ENCODE measurements at regions of chr3 and their contacts with region 1.

Region 1: DNA sequence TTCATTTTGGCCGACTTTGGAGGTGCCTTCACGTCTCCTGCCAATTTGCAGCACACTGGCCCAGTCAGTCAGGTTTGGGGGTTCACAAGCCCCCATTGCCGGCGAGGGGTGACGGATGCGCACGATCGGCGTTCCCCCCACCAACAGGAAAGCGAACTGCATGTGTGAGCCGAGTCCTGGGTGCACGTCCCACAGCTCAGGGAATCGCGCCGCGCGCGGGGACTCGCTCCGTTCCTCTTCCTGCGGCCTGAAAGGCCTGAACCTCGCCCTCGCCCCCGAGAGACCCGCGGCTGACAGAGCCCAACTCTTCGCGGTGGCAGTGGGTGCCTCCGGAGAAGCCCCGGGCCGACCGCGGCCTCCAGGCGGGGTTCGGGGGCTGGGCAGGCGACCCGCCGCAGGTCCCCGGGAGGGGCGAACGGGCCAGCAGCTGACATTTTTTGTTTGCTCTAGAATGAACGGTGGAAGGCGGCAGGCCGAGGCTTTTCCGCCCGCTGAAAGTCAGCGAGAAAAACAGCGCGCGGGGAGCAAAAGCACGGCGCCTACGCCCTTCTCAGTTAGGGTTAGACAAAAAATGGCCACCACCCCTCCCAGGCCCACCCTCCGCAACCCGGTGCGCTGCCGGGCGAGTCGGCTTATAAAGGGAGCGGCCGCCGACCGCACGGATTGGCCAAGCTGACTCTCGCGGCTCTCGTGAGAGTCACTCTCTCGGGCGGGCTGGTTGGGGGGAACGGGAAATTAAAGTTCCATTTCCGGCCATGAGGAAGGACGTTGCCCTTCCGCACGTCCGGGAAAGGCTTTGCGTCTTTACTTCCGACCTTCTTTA is at the start of gene TERC:
- DNase-seq: peak; percentile 95
- ATAC-seq: peak; percentile 84
- H3K4me3 Mint-ChIP-seq: peak within 1 kb of the TSS; percentile 91
- H3K27ac Mint-ChIP-seq: peak within 1 kb of the TSS; percentile 98
- H3K4me1 Mint-ChIP-seq: peaks cover 23% of the 10 kb centered on the region
- H3K27me3 Mint-ChIP-seq: no peaks in the 10 kb centered on the region
- total RNA-seq, gene TERC: 2.6 to 11.1 TPM

Region 2: GRCh38 chr3:169591983-169592644 is 172.5 kb before region 1 on chr3:
- CTCF ChIA-PET with region 1: no interaction called
- POLR2A ChIA-PET with region 1: no interaction called
- intact Hi-C with region 1: no loop called
- DNase-seq: no peak
- ATAC-seq: no peak
- H3K4me3 Mint-ChIP-seq: no peak overlapping the region
- H3K27ac Mint-ChIP-seq: no peak overlapping the region
- H3K4me1 Mint-ChIP-seq: no peaks in the 10 kb centered on the region
- H3K27me3 Mint-ChIP-seq: peaks cover 4% of the 10 kb centered on the region

Region 3: DNA sequence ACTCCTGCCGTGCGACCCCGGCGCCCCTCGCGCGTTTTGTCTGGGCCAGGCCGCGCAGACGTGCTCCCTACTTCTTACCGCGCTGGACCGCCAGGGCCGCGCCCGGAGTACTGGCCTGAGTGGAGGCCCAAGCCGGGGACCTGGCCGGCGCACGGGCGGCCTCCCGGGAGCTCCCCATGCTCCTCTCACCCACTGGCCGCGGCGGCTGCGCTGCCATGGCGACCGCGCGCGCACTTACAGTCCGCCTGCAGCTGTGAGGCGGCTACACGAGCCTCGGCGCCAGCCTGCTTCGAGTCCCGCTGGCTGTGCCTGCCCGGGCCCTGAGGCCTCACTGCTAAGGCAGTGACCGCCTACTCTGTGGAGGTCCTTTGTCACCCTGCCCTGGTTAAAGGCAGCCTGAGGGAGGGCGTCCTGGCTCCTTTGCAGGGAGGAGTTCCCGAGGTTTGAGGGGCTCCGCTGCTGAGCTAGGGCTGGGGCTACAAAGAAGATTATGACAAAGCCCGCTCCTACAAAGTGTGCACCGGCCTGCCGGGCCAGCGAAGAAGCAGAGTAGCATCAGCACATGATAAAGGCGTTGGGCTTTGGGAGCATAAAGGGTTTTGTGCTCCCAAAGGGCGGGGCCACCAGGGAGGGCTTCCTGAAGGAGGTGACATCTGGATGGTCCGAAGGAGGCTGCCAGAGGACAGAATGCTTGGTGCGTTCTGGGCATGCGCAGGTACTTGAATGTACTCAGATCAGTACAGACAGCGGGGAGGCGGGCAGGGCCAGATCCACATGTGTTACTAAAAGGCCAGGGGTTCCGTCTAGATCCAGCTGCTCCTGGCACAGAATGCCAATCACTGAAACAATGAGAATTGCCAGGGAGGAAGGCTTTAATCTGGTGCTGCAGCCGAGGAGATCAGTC is 47.9 kb after region 1 on chr3 and contains the starts of genes LRRC34 and LRRIQ4:
- CTCF ChIA-PET with region 1: no interaction called
- POLR2A ChIA-PET with region 1: no interaction called
- intact Hi-C with region 1: loop called (anchors 1 to 2 kb)
- DNase-seq: peak; percentile 90
- ATAC-seq: peak; percentile 77
- H3K4me3 Mint-ChIP-seq: peak within 1 kb of the TSS; percentile 77
- H3K27ac Mint-ChIP-seq: peak within 1 kb of the TSS; percentile 82
- H3K4me1 Mint-ChIP-seq: peaks cover 27% of the 10 kb centered on the region
- H3K27me3 Mint-ChIP-seq: peaks cover 2% of the 10 kb centered on the region
- total RNA-seq, gene LRRC34: 3.8 TPM
- total RNA-seq, gene LRRIQ4: 0.09 to 0.12 TPM

Region 4: GRCh38 chr3:169966428-169966950 is 201.8 kb after region 1 on chr3 and contains the start of gene SEC62:
- CTCF ChIA-PET with region 1: interaction called, 3 read pairs
- POLR2A ChIA-PET with region 1: interaction called, 9 read pairs
- intact Hi-C with region 1: loop called (anchors 2 kb)
- DNase-seq: peak; percentile 97
- ATAC-seq: peak; percentile 85
- H3K4me3 Mint-ChIP-seq: peak within 1 kb of the TSS; percentile 83
- H3K27ac Mint-ChIP-seq: peak within 1 kb of the TSS; percentile 95
- H3K4me1 Mint-ChIP-seq: peaks cover 62% of the 10 kb centered on the region
- H3K27me3 Mint-ChIP-seq: no peaks in the 10 kb centered on the region
- total RNA-seq, gene SEC62: 62.8 to 74.7 TPM

Region 5: GRCh38 chr3:170055209-170055608 is 290.5 kb after region 1 on chr3:
- CTCF ChIA-PET with region 1: interaction called, 4 read pairs
- POLR2A ChIA-PET with region 1: no interaction called
- intact Hi-C with region 1: loop called (anchors 2 to 5 kb)
- DNase-seq: peak; percentile 45
- ATAC-seq: peak; percentile 70
- H3K4me3 Mint-ChIP-seq: no peak overlapping the region
- H3K27ac Mint-ChIP-seq: no peak overlapping the region
- H3K4me1 Mint-ChIP-seq: peaks cover 41% of the 10 kb centered on the region
- H3K27me3 Mint-ChIP-seq: no peaks in the 10 kb centered on the region

Region 6: DNA sequence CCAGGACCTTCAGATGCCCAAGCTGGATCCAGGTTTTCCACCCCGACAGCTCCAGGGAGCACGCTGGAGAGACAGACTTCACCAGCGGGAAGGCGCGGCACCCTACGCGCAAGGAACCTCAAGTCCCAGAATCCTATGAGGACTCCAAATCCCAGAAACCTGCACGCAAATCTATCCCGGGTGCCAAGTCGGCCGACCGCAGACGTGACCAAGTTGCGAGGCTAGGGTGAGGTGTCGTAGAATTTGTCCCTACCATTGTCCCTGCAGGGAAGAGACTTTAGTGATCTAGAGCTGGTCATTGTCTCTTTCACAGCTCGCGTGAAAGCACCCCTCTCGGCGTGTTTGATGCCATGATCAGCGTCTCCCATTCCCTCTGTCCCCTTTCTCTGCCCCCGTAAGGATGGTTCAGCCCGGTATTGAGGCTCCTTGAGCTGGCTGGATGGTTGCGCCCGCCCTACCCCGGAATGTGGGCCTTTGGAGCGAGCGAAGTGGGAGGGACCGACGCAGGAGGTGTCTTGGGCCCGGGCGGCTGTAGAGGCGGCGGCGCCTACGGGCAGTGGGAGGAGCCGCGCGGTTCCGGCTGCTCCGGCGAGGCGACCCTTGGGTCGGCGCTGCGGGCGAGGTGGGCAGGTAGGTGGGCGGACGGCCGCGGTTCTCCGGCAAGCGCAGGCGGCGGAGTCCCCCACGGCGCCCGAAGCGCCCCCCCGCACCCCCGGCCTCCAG is 457.4 kb after region 1 on chr3 and contains the start of gene PRKCI:
- CTCF ChIA-PET with region 1: no interaction called
- POLR2A ChIA-PET with region 1: interaction called, 3 read pairs
- intact Hi-C with region 1: loop called in 1 of 2 experiments (anchors 2 kb)
- DNase-seq: peak; percentile 95
- ATAC-seq: peak; percentile 95
- H3K4me3 Mint-ChIP-seq: peak within 1 kb of the TSS; percentile 89
- H3K27ac Mint-ChIP-seq: peak within 1 kb of the TSS; percentile 95
- H3K4me1 Mint-ChIP-seq: peaks cover 32% of the 10 kb centered on the region
- H3K27me3 Mint-ChIP-seq: no peaks in the 10 kb centered on the region
- total RNA-seq, gene PRKCI: 32.3 to 33.0 TPM

Region 7: GRCh38 chr3:170572665-170573253 is 808.1 kb after region 1 on chr3:
- CTCF ChIA-PET with region 1: no interaction called
- POLR2A ChIA-PET with region 1: no interaction called
- intact Hi-C with region 1: loop called in 1 of 2 experiments (anchors 10 kb)
- DNase-seq: peak; percentile 32
- ATAC-seq: peak; percentile 97
- H3K4me3 Mint-ChIP-seq: no peak overlapping the region
- H3K27ac Mint-ChIP-seq: no peak overlapping the region
- H3K4me1 Mint-ChIP-seq: peaks cover 25% of the 10 kb centered on the region
- H3K27me3 Mint-ChIP-seq: peaks cover 34% of the 10 kb centered on the region

Region 8: DNA sequence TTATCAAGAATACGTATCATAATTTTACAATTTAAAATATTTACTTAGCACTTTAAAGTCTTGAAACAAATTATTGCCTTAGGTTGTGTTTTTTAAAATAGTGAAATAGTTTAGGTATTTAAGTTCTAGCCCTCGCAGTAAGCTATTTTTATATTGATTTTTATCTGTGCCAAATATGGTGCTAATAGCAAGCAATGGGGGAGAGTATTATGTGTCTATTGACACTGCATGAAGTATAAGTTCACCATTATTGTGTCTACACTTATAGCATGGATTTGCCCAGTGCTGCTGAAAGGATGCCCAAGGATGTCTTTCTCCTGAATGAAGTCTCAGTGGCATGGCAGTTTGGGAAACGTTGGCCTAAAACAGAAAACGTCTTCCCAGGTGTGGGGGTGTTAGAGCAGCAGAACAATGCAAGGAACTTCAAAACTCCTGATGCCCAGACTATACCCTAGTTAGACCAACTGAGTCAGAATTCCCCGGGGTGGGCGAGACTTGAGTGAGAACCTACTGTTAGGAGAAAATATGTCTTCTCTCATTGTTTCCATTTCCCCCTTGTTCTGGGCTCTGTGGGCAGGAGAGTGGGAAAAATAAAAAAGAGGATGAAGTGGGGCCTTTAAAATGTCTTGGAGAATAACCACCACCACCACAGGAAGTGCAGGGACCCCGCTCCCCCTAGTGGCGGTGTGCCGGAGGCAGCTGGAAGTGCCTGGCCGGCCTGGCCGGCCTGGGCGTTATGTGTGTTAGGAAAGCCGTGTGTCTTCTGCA is 925.4 kb after region 1 on chr3:
- CTCF ChIA-PET with region 1: no interaction called
- POLR2A ChIA-PET with region 1: no interaction called
- intact Hi-C with region 1: no loop called
- DNase-seq: peak; percentile 73
- ATAC-seq: peak; percentile 49
- H3K4me3 Mint-ChIP-seq: no peak overlapping the region
- H3K27ac Mint-ChIP-seq: no peak overlapping the region
- H3K4me1 Mint-ChIP-seq: peaks cover 4% of the 10 kb centered on the region
- H3K27me3 Mint-ChIP-seq: no peaks in the 10 kb centered on the region

Region 9: GRCh38 chr3:170724599-170725280 is 960.1 kb after region 1 on chr3:
- CTCF ChIA-PET with region 1: no interaction called
- POLR2A ChIA-PET with region 1: no interaction called
- intact Hi-C with region 1: no loop called
- DNase-seq: no peak
- ATAC-seq: no peak
- H3K4me3 Mint-ChIP-seq: no peak overlapping the region
- H3K27ac Mint-ChIP-seq: no peak overlapping the region
- H3K4me1 Mint-ChIP-seq: no peaks in the 10 kb centered on the region
- H3K27me3 Mint-ChIP-seq: peaks cover 16% of the 10 kb centered on the region

Region 10: DNA sequence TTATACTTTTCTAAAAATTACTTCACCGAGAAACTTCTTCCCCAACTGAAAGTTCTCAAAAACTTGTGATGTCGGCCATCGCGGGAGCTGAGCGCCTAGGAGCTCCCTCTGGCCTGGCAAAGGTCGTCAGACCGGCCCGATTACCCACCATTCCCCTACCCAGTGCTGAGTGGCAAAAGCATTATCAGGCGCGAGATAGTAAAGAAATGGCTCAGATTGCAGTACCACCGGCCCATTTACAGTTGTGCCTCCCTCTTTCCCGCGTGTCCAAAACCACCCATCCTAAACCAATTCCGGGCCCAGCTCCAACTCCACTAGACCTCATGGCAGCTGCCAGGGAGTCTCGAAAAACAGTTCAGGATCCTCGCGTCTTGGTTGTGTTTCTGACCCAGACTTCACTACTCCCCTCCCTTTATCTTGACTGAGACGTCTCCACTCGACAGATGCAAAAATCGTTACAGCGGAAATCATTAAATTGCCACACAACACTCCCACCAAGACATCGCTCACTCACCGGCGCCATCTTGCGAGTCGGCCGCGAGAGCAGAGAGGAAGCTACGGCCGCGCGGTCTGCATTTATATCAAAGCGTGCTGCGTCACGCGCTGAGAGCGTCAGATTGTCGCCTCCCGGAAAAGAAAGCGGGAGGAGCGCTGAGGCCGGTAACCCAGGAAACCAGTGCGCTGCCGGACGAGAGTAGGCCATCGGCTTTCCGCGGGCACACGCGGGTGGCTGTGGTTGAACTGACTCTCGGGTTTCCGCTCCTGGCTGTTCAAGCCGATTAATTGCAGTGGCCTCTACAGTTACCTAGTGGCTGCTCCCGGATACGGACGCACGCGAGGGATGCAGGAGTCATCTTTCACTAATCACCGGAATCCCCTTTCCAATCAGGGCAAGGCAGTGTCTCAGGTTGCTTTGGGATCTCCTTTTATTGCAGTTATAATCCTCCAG is 1105.3 kb after region 1 on chr3 and contains the start of gene RPL22L1:
- CTCF ChIA-PET with region 1: no interaction called
- POLR2A ChIA-PET with region 1: interaction called, 4 read pairs
- intact Hi-C with region 1: loop called in 1 of 2 experiments (anchors 5 kb)
- DNase-seq: peak; percentile 96
- ATAC-seq: peak; percentile 95
- H3K4me3 Mint-ChIP-seq: peak within 1 kb of the TSS; percentile 94
- H3K27ac Mint-ChIP-seq: peak within 1 kb of the TSS; percentile 99
- H3K4me1 Mint-ChIP-seq: peaks cover 15% of the 10 kb centered on the region
- H3K27me3 Mint-ChIP-seq: no peaks in the 10 kb centered on the region
- total RNA-seq, gene RPL22L1: 186 to 441 TPM

Measured in activated CD4-positive, alpha-beta T cell treated with anti-CD3 and anti-CD28 coated beads for 36 hours (primary cell).